Activated CD4-positive, alpha-beta memory T cell treated with anti-CD3 and anti-CD28 coated beads for 36 hours (primary cell): ENCODE measurements at regions of chr12 and their contacts with region 1.

Region 1: DNA sequence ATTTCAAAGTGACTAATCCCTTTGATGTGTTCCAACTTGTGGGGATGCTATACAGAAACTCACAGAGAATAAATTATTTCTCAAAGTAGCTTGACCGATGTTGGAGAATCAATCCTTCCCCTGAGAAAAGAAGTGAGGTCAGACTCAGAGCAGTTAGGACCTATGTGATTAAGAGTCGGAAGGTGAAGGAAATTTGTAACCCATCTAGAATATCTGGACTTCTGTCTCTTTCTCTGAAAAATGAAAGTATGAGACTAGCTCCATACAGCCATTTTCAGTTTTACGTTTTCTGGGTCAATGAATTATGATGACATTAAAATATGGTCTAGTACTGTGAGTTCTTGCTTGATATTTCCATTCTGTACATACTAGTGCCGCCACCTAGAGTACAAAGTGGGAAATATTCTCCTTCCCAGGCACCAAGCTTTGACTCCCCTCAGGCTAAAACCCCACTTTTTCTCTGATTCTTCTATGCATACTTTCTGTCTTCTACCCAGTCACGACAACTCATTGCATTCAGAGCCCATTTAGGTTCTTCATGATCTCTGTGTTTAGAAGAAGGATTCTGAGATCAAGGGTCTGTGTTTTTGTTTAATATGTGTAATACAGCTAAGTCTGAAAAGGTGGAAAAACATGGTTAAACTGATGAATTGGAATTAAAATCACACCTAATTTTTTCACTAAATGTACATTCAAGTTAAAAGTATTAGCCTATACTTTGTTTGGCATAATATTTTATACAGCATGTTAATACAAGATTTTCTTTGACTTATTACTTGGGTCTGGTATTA is 6.9 kb upstream of the NTS start:
- DNase-seq: no peak
- H3K4me3 Mint-ChIP-seq: no peak overlapping the region
- H3K27ac Mint-ChIP-seq: no peak overlapping the region
- H3K4me1 Mint-ChIP-seq: no peaks in the 10 kb centered on the region
- H3K27me3 Mint-ChIP-seq: no peaks in the 10 kb centered on the region

Region 2: DNA sequence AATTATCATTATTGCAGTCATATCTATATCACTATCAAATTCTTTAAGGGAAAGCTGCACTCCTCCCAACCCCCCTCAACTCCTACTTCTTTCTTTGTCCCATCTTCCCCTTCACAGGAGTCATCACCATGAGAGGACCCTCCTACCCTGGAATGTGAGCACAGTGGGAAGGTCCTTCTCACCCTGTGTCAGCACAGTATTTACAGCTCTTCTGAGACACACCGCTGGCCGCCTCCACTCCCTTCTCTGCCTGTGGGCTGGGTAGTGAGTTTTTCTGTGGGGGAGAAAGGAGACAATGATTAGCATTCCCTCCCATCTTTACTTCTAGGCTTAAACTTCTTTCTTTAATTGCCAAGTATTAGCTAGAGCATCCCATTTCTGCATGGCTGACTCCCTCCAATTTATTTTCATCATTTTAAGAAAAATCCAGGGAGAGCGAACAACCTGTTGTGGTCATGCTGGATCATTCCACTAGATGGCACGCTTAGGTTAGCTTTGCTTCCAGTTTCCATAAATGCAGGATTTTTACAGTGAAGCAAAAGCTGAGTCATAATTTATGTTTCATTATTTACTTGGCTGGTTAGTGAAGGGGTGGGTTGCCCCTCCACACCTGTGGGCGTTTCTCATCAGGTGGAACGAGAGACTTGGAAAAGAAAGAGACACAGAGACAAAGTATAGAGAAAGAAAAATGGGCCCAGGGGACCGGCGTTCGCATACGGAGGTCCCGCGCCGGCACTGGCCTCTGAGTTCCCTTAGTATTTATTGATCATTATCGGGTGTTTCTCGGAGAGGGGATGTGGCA is 398.6 kb before region 1 on chr12:
- CTCF ChIA-PET with region 1: interaction called, 10 read pairs
- POLR2A ChIA-PET with region 1: no interaction called
- intact Hi-C with region 1: no loop called
- DNase-seq: peak; percentile 31
- H3K4me3 Mint-ChIP-seq: peak overlapping the region; percentile 52
- H3K27ac Mint-ChIP-seq: no peak overlapping the region
- H3K4me1 Mint-ChIP-seq: peaks cover 6% of the 10 kb centered on the region
- H3K27me3 Mint-ChIP-seq: peaks cover 3% of the 10 kb centered on the region

Region 3: GRCh38 chr12:85575120-85576096 is 291.8 kb before region 1 on chr12:
- CTCF ChIA-PET with region 1: interaction called, 3 read pairs
- POLR2A ChIA-PET with region 1: no interaction called
- intact Hi-C with region 1: loop called (anchors 1 kb)
- DNase-seq: peak; percentile 21
- H3K4me3 Mint-ChIP-seq: no peak overlapping the region
- H3K27ac Mint-ChIP-seq: no peak overlapping the region
- H3K4me1 Mint-ChIP-seq: no peaks in the 10 kb centered on the region
- H3K27me3 Mint-ChIP-seq: no peaks in the 10 kb centered on the region

Region 4: GRCh38 chr12:85814116-85814515 is 53.1 kb before region 1 on chr12:
- CTCF ChIA-PET with region 1: no interaction called
- POLR2A ChIA-PET with region 1: no interaction called
- intact Hi-C with region 1: no loop called
- DNase-seq: no peak
- H3K4me3 Mint-ChIP-seq: no peak overlapping the region
- H3K27ac Mint-ChIP-seq: no peak overlapping the region
- H3K4me1 Mint-ChIP-seq: no peaks in the 10 kb centered on the region
- H3K27me3 Mint-ChIP-seq: no peaks in the 10 kb centered on the region